ENCODE measurements at regions of chr9 and their contacts with region 1.

Region 1: DNA sequence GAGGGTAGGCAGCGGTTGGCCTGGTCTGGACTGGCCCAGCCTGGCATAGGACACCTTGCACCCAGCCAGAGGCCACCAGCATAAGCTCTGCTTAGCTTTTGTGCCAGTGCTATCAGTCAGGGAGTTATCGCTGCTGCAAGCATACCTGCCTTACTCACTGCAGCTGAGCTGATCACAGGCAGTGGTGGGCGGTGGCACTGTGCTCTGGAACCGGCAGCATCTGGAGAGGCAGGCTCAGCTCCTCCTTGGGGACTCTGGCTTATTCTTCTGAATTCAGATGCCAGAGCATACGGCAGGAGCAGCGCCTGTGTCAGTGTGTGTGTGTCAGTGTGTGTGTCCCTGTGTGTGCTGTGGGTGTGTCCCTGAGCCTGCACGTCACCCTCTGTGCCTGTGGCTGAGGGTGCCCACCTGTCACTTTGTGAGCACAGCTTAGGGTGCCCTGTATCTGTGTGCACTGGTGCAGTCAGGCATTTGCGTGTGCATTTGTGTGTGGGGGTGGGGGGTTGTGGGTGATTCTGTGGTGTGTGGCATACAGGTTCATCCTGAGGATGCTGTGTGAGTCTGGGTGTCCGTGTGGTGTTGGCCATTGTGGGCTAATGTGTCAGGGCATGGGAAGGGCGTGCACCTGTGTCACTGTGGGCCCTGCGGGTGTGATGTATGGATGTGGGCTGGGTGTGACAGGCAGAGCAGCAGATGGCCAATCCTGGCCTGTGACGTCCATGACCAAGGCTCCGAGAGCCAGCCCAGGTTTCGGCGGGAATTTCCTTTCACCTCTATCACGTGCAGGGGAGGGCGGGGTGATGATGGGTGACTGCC is 23.5 kb downstream of the LMX1B start:
- DNase-seq: no peak
- H3K4me3 ChIP-seq: no peak overlapping the region
- H3K27ac ChIP-seq: no peak overlapping the region
- H3K4me1 ChIP-seq: peaks cover 0 to 19% (median 6%) of the 10 kb centered on the region in 4 experiments; a peak in 6 of 7 replicates
- H3K27me3 ChIP-seq: peaks cover 12 to 90% (median 69%) of the 10 kb centered on the region in 4 experiments
- CTCF ChIP-seq: no peak
- EP300 ChIP-seq: no peak
- POLR2A ChIP-seq: no peak
- RAD21 ChIP-seq: no peak

Region 2: GRCh38 chr9:126611592-126612325 is 25.4 kb before region 1 on chr9:
- CTCF ChIA-PET with region 1: interaction called, 17 read pairs
- POLR2A ChIA-PET with region 1: interaction called, 4 read pairs
- DNase-seq: peak; percentile 70 to 95
- H3K4me3 ChIP-seq: peak overlapping the region; percentile 30 to 63 (median 34); a peak in 6 of 8 replicates
- H3K27ac ChIP-seq: no peak overlapping the region
- H3K4me1 ChIP-seq: peaks cover 12 to 54% (median 34%) of the 10 kb centered on the region in 4 experiments
- H3K27me3 ChIP-seq: peaks cover 80 to 92% (median 85%) of the 10 kb centered on the region in 4 experiments; a peak in 6 of 7 replicates
- CTCF ChIP-seq: peak in 2 of 3 experiments; percentile 87; a peak in 3 of 4 replicates
- EP300 ChIP-seq: no peak; a peak in 1 of 3 replicates
- POLR2A ChIP-seq: no peak
- RAD21 ChIP-seq: peak; percentile 72 to 82

Region 3: DNA sequence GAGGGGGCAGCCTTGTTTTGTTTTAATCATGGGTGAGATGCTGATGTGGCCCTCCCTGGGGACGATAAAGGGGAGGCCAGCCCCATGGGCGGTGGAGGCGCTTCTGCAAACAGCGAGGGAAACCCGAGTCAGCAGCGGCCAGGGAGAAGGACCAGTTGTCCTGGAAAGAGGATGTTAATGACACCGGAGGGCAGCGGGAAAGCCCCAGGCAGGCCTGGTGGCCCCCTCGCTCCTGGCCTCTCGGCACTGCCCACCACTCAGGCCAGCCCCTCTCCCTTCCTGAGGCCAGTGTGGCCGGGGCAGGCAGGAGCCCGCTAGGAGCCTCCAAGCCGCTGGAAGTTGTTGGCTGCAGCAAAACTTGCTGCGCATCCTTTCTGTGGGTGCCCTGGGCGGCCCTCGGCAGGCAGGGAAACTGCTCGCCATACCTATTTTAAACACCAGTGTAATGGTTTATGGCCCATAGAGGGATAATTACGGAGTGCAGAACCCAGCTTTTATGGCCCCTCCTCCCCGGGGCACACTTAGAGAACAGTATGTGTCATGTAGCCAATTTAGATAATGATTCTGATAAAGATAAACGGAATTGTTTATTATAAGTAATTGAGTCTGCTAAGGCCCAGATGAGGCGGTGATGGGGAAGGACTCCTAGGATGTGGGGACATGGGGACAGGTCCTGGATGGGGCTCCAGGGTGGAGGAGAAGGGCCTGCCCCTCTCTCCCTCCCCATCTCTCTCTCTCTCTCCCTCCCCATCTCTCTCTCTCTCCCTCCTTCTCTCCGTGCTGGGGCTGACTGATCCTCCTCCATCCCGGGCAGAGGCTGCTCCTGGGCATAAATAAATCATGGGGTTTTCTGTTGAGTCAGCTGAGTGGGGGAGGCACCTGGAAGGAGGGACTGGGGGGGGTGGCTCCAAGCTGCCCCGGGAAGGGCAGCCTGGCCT is 13.5 kb after region 1 on chr9:
- CTCF ChIA-PET with region 1: interaction called, 24 read pairs
- POLR2A ChIA-PET with region 1: interaction called, 5 read pairs
- DNase-seq: no peak
- H3K4me3 ChIP-seq: no peak overlapping the region
- H3K27ac ChIP-seq: no peak overlapping the region
- H3K4me1 ChIP-seq: peaks cover 3 to 22% (median 11%) of the 10 kb centered on the region in 4 experiments
- H3K27me3 ChIP-seq: peaks cover 0 to 9% (median 0%) of the 10 kb centered on the region in 4 experiments; a peak in 3 of 7 replicates
- CTCF ChIP-seq: no peak
- EP300 ChIP-seq: no peak
- POLR2A ChIP-seq: no peak
- RAD21 ChIP-seq: no peak

Region 4: DNA sequence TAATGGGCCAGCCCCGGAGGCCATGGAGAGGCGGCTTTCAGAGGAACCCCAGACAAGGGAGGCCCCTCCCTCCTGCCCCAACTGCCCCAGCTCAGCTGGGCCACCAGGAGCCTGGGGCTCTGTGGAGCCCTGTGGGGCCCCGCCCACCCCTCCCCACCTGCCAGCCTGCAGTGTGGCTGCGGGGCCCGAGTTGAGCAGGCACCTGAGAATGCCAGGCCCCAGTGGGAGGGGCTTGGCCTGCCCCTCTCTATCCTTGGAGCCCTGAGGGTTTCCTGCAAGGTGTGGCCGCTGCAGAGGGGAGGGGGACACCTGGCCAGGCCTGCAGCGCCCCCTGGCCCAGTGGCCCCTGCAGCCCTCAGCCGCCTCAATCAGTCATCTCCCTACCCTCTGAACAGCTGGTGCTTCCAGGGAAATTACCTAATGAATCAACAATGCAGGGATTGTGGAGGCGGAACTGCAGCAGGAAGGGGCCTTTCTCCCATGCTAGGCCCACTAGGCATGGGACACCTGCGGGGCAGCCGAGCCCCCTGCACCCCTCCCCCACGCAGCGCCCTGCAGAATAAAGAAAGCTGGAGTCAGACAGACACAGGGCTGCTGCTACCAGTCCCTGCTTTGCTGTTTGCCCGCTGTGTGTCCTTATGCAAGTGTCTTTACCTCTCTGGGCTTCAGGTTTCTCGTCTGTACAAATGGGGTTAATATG is 24.5 kb after region 1 on chr9:
- CTCF ChIA-PET with region 1: interaction called, 54 read pairs
- POLR2A ChIA-PET with region 1: interaction called, 5 read pairs
- DNase-seq: peak; percentile 84 to 90
- H3K4me3 ChIP-seq: no peak overlapping the region; a peak in 1 of 8 replicates
- H3K27ac ChIP-seq: no peak overlapping the region
- H3K4me1 ChIP-seq: peaks cover 11 to 41% (median 30%) of the 10 kb centered on the region in 4 experiments
- H3K27me3 ChIP-seq: peaks cover 0 to 6% (median 2%) of the 10 kb centered on the region in 4 experiments; a peak in 3 of 7 replicates
- CTCF ChIP-seq: peak in 2 of 3 experiments; percentile 62 to 81; a peak in 3 of 4 replicates
- EP300 ChIP-seq: no peak
- POLR2A ChIP-seq: no peak
- RAD21 ChIP-seq: peak; percentile 62 to 75

Region 5: DNA sequence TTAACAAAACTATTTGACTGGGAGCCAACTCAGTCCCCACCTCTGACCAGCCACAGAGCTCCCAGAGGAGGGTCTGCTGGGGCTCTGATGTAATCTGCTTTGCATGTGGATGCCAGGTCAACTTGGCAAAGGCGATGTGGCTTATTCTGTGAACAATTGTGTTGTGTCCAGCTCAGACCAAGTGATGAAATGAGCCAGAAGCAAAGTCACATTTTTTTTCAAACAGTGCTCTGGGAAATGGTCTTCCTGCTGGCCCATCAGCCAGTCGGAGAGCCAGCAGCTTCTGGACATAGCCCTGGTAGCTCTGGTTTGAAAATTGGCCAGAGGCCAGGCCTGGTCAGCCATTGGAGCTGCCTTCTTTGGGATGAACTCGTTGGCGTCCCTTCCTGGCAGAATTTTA is 398.8 kb after region 1 on chr9:
- CTCF ChIA-PET with region 1: no interaction called
- POLR2A ChIA-PET with region 1: no interaction called
- DNase-seq: no peak
- H3K4me3 ChIP-seq: no peak overlapping the region
- H3K27ac ChIP-seq: no peak overlapping the region
- H3K4me1 ChIP-seq: no peaks in the 10 kb centered on the region
- H3K27me3 ChIP-seq: no peaks in the 10 kb centered on the region
- CTCF ChIP-seq: no peak
- EP300 ChIP-seq: no peak
- POLR2A ChIP-seq: no peak
- RAD21 ChIP-seq: no peak